ENCODE measurements at regions of chr1 and their contacts with region 1.

Region 1: DNA sequence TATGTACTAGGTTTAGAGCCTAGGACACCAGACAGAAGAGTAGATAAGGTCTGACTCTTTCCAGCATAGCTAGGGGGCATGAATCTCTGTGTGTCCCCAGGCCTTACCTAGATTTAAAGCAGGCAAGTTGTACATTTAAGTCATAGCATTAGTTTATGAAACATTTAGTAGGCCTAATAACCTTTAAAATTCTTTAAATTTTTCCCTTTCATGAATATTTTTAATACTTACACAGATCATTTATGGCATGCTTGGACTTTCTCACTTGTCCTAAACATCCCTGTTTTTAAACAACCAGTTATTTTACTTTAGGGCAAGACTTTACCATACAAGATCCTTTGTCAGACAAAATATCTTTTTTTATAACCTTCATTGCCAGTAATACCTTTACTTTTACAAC is 258.4 kb upstream of the ZRANB2 start:
- DNase-seq: no peak

Region 2: GRCh38 chr1:71390518-71390917 is 51.3 kb after region 1 on chr1:
- intact Hi-C with region 1: loop called (anchors 10 kb)
- DNase-seq: no peak

Region 3: GRCh38 chr1:71473331-71473730 is 134.1 kb after region 1 on chr1:
- intact Hi-C with region 1: no loop called
- DNase-seq: no peak

Region 4: GRCh38 chr1:71587961-71588360 is 248.7 kb after region 1 on chr1:
- intact Hi-C with region 1: no loop called
- DNase-seq: no peak